ENCODE measurements at regions of chr1 and their contacts with region 1.

Region 1: DNA sequence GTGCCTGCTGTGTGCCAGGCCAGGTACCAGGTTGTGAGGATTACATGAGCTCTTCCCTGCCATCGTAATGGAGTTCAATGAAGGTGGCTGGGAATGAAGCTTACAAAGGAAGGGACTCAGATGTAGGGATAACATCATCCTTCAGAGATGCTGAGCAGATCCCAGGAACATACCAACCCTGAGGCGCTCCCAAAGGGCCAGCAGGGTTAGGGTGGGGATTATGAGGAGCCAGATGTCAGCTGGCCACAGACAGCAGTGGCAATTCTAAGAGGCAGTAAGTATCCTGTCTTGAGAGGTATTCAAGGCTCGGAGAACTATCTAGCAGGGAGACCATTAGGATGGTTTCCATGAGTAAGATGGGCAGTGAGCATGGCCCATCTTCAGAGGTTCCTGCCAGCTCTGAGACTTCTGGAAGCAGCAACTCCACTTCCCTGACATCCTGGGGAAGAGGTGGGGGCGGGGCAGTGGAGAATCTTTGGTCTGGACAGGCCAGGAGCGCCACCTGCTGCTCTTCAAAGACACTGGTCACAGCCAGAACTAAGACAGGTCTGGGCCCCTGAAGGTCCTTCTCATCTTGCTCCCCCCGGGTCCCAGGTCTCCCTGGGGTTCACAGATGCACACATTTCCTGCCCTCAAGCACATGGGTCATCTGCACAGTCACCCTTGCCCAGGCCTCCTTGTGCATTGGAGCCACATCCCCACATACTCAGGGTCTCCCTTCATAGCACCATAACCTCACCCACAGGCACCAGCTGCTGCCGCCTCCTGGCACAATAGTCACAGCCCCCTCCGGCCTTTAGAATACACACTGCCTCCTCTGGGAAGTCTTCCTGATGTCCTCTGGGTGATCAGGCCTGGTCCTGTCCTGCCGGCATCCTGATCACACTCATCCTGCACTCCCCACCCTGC is 2.7 kb upstream of the SDC3 start:
- DNase-seq: peak; percentile 90 to 94 (median 91)
- ATAC-seq: peak; percentile 71
- H3K4me3 ChIP-seq: no peak overlapping the region
- H3K27ac ChIP-seq: no peak overlapping the region
- H3K4me1 ChIP-seq: peaks cover 15% of the 10 kb centered on the region
- H3K27me3 ChIP-seq: no peaks in the 10 kb centered on the region
- CTCF ChIP-seq: peak; percentile 63 to 93 (median 92)
- POLR2A ChIP-seq: no peak

Region 2: GRCh38 chr1:30719406-30720270 is 191.7 kb before region 1 on chr1:
- intact Hi-C with region 1: loop called (anchors 5 kb)
- DNase-seq: no peak
- ATAC-seq: no peak
- H3K4me3 ChIP-seq: no peak overlapping the region
- H3K27ac ChIP-seq: peak overlapping the region; percentile 92 to 99 (median 98)
- H3K4me1 ChIP-seq: peaks cover 12% of the 10 kb centered on the region
- H3K27me3 ChIP-seq: no peaks in the 10 kb centered on the region
- CTCF ChIP-seq: no peak
- POLR2A ChIP-seq: no peak

Region 3: GRCh38 chr1:30779294-30780071 is 131.8 kb before region 1 on chr1:
- intact Hi-C with region 1: loop called (anchors 5 kb)
- DNase-seq: peak; percentile 73 to 84 (median 82)
- ATAC-seq: peak; percentile 74
- H3K4me3 ChIP-seq: no peak overlapping the region
- H3K27ac ChIP-seq: no peak overlapping the region
- H3K4me1 ChIP-seq: peaks cover 7% of the 10 kb centered on the region
- H3K27me3 ChIP-seq: no peaks in the 10 kb centered on the region
- CTCF ChIP-seq: peak; percentile 82 to 97 (median 90)
- POLR2A ChIP-seq: no peak

Region 4: GRCh38 chr1:30801771-30802198 is 109.5 kb before region 1 on chr1:
- intact Hi-C with region 1: loop called (anchors 2 kb)
- DNase-seq: peak; percentile 76 to 88 (median 83)
- ATAC-seq: peak; percentile 75
- H3K4me3 ChIP-seq: no peak overlapping the region
- H3K27ac ChIP-seq: no peak overlapping the region
- H3K4me1 ChIP-seq: peaks cover 18% of the 10 kb centered on the region
- H3K27me3 ChIP-seq: no peaks in the 10 kb centered on the region
- CTCF ChIP-seq: peak; percentile 89 to 93 (median 92)
- POLR2A ChIP-seq: no peak